ENCODE measurements at regions of chr20 and their contacts with region 1.

Region 1: DNA sequence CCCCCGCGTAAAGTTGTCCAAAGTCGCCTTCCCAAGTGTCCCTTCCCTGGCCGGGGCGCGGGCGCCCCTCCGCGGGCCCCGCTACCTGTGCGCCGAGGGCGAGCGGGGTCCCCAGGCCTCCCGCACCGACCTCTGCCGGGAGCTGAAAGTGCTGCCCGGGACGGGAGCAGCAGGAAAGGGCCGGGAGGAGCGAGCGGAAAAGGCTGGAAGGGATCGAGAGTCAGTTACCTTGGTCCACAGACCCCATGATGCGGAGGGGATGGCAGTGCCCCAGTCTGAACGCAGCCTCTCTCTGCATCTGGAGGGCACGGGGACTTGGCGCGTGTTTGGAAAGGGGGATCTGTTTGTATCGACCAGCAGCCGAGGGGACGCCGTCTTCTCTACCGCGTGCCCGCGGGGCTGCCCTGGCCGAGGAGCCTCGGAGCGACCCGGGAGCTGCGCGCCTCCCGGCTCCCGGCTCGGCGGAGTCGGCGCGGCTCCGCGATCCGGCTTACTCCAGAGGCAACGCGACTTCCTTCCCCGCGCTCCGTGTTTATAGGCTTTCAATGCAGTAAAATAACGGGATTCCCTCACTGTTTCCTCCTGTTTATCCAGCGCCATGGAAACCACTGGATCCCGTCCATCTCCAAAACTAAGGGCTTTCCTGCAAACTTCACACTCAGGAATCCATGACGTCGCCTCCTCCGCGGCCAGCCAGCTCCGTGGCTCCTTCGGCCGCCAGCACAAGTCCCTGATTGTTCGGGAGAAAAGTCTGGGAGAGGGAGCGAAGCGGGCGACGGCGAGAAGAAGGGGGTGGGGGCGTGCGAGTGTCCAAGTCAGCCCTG is 20.0 kb upstream of the NFATC2 start:
- DNase-seq: peak; percentile 85 to 95 (median 88)
- H3K4me3 ChIP-seq: peak overlapping the region; percentile 50
- H3K27ac ChIP-seq: peak overlapping the region; percentile 88 to 96
- H3K4me1 ChIP-seq: peaks cover 11% of the 10 kb centered on the region
- H3K27me3 ChIP-seq: no peaks in the 10 kb centered on the region
- CTCF ChIP-seq: no peak
- EP300 ChIP-seq: peak; percentile 37
- POLR2A ChIP-seq: peak; percentile 88

Region 2: DNA sequence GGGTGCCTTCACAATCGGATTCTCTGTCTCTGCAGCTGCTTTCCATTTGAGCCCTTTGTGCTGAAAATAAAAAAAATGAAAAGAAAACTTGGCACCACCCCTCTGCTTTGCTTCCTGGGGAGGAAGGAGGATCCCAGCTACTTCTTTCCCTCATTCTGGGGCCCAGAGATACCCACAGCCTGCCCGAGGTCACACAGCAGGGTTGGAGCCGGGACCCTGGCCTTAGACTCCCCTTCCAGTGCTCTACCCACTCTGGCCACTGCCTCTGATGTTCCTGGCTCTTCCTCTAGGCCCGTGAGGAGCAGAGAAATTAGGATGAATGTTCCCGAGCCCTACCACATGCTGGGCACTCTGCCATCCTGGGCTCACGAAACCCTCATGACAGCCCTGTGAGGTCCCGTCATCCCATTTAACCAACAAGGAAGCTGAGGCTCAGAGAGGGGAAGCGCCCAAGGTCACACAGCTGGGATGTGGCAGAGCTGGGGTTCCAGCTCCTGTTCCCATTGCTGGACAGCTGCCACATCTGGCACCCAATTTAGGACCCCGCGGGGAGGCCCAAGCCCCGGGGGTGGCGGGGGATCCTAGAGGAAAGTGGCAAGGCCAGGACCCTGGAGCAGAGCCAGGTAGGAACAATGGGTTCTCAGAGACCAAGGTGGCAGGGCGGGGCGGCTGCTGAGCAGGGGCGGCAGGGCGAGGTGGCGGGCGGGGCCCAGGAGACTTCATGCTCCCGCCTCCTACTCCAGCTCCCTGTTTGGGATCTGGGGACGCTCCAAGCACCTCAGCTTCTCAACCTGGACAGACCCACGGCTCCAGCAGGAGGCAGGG is 1295.3 kb before region 1 on chr20:
- intact Hi-C with region 1: loop called in 1 of 4 experiments (anchors 5 kb)
- DNase-seq: no peak
- H3K4me3 ChIP-seq: no peak overlapping the region
- H3K27ac ChIP-seq: no peak overlapping the region
- H3K4me1 ChIP-seq: peaks cover 3% of the 10 kb centered on the region
- H3K27me3 ChIP-seq: no peaks in the 10 kb centered on the region
- CTCF ChIP-seq: no peak
- EP300 ChIP-seq: no peak
- POLR2A ChIP-seq: no peak

Region 3: DNA sequence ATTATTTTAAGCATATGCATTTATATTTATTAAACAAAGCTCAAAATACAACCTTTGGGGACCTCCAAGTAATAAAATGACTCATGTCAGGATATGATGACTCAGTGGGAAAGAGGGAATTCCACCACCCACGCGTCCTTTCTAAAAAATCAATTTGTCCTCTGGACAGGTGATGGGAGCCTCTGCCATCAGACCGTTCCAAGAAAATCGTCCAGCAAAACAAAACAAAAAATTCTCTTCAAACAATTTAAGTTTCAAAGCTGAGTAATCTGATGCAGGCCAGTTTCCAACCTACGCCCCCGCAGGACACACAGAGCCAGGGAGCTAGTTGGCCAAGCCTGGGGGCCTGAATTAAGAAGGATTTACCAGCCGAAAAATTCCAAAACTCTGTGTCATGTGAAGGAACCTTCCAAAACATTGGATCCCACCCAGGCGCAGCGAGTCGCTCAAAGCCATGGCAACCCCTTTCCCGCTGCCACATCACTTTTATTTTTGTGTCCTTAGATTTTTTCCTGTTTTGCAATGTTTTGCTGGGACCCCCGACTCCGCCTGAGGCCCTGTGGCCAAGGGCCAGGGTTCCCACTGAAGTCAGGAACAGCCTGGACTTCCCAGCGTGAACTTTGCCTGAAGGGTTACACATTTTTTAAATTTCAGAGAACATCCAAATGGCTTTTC is 115.3 kb before region 1 on chr20:
- intact Hi-C with region 1: loop called in 2 of 4 experiments (anchors 5 to 10 kb)
- DNase-seq: peak; percentile 80 to 90 (median 85)
- H3K4me3 ChIP-seq: no peak overlapping the region
- H3K27ac ChIP-seq: peak overlapping the region in 1 of 2 donors; percentile 40
- H3K4me1 ChIP-seq: peaks cover 4% of the 10 kb centered on the region
- H3K27me3 ChIP-seq: no peaks in the 10 kb centered on the region
- CTCF ChIP-seq: no peak
- EP300 ChIP-seq: no peak
- POLR2A ChIP-seq: no peak

Region 4: GRCh38 chr20:51456511-51457509 is 105.7 kb before region 1 on chr20:
- intact Hi-C with region 1: loop called in 1 of 4 experiments (anchors 10 kb)
- DNase-seq: peak; percentile 97 to 99 (median 98)
- H3K4me3 ChIP-seq: no peak overlapping the region
- H3K27ac ChIP-seq: peak overlapping the region; percentile 46
- H3K4me1 ChIP-seq: peaks cover 8% of the 10 kb centered on the region
- H3K27me3 ChIP-seq: no peaks in the 10 kb centered on the region
- CTCF ChIP-seq: no peak
- EP300 ChIP-seq: no peak
- POLR2A ChIP-seq: no peak

Region 5: DNA sequence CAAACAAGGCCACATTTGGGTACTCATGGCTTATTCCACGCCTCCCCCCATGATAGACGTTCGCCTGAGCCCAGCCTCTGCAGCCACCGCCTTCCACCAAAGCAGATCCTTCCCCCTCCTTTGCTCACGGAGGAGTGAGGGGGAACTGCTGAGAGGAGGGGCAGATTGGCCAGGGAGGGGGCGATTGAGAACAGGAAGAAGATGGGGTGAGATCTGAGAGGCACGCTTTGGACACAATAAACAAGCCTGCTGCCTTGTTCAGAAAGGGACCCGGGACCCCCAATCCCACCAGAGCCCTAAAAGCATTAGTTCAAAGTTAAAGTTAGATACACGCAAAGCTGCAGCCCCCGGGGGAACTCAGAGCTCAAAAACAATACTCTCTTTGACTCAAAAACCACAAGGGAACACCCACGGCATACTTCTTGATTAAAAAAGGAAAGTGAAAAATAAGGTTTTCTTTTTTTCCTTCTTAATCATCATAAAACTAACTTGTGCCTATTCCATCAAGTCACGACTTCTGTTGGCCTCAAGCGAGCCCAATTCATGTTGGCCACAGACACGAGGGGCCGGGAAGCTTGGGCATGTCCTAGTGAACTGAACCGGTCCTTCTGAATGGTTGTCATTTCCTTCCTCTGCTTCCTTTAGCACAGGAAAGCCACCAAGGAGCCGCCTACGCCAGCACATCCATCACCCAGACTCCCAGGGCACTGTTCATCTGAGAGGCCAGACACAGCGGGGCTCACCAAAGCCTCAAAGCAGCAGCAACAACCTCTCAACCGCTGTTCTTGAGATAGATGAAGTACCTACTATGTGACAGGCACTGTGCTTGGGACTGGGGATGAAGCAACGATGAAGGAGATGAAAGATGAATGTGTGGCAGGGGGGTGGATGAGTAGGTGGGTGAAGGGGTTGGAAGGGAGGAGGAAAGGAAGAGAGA is 64.7 kb before region 1 on chr20:
- intact Hi-C with region 1: loop called in 1 of 4 experiments (anchors 10 kb)
- DNase-seq: no peak
- H3K4me3 ChIP-seq: no peak overlapping the region
- H3K27ac ChIP-seq: no peak overlapping the region
- H3K4me1 ChIP-seq: peaks cover 3% of the 10 kb centered on the region
- H3K27me3 ChIP-seq: no peaks in the 10 kb centered on the region
- CTCF ChIP-seq: no peak
- EP300 ChIP-seq: no peak
- POLR2A ChIP-seq: no peak